A549 (cell line): ENCODE measurements at regions of chr12 and their contacts with region 1.

Region 1: GRCh38 chr12:113955109-113955970 is 10.8 kb downstream of the RBM19 start:
- DNase-seq: peak; percentile 70 to 73
- ATAC-seq: peak; percentile 88 to 96
- H3K4me3 ChIP-seq: no peak overlapping the region
- H3K27ac ChIP-seq: no peak overlapping the region
- H3K4me1 ChIP-seq: no peaks in the 10 kb centered on the region
- CTCF ChIP-seq: peak; percentile 60
- EP300 ChIP-seq: no peak
- POLR2A ChIP-seq: no peak
- RAD21 ChIP-seq: peak; percentile 14 to 27; a peak in 2 of 5 replicates

Region 2: DNA sequence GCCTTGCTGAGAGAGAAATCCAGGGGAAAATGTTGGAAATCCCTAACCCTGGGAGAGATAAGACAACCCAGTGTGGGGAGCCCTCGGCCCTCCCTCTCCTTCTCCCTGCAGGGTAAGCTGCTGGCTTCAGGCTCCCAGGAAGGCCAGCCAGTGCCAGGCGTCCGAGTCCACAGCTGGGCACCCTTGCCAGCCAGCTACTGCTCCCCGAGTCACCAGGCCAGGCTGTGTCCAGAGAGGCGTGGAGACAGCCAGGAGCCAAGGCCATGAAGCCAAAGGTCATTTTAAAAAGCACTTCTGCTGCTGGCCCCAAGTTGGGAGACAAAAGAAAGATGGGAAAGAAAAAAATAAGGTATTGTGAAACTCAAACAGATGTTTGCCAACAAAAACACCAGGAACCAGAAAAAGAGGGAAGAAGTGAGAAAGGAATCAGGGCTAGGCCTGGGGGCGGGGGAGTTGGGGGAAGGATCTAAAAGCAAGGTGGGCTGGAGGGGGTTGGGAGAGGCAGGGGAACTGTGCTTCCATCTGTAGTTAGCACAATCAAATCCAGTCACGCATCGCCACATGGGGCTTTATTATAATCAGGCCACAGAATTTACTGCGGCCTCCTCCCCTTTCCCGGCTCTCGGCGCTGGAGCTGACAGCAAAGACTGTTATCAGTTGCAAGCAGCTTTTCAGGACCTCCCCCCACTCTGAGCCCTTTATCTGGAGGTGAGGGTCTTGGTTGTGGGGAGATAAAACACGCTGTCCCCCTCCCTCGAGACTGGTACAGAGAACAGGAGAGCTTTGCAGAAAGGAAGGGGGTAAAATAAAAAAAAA is 22.8 kb before region 1 on chr12:
- CTCF ChIA-PET with region 1: interaction called, 17 read pairs
- POLR2A ChIA-PET with region 1: no interaction called
- DNase-seq: no peak
- ATAC-seq: no peak
- H3K4me3 ChIP-seq: no peak overlapping the region
- H3K27ac ChIP-seq: no peak overlapping the region
- H3K4me1 ChIP-seq: no peaks in the 10 kb centered on the region
- CTCF ChIP-seq: no peak
- EP300 ChIP-seq: no peak
- POLR2A ChIP-seq: no peak
- RAD21 ChIP-seq: no peak

Region 3: GRCh38 chr12:113940357-113941207 is 14.8 kb before region 1 on chr12:
- CTCF ChIA-PET with region 1: interaction called, 17 read pairs
- POLR2A ChIA-PET with region 1: no interaction called
- DNase-seq: no peak
- ATAC-seq: peak in 1 of 2 experiments; percentile 58; a peak in 3 of 6 replicates
- H3K4me3 ChIP-seq: no peak overlapping the region
- H3K27ac ChIP-seq: no peak overlapping the region
- H3K4me1 ChIP-seq: no peaks in the 10 kb centered on the region
- CTCF ChIP-seq: no peak
- EP300 ChIP-seq: no peak
- POLR2A ChIP-seq: no peak
- RAD21 ChIP-seq: no peak

Region 4: DNA sequence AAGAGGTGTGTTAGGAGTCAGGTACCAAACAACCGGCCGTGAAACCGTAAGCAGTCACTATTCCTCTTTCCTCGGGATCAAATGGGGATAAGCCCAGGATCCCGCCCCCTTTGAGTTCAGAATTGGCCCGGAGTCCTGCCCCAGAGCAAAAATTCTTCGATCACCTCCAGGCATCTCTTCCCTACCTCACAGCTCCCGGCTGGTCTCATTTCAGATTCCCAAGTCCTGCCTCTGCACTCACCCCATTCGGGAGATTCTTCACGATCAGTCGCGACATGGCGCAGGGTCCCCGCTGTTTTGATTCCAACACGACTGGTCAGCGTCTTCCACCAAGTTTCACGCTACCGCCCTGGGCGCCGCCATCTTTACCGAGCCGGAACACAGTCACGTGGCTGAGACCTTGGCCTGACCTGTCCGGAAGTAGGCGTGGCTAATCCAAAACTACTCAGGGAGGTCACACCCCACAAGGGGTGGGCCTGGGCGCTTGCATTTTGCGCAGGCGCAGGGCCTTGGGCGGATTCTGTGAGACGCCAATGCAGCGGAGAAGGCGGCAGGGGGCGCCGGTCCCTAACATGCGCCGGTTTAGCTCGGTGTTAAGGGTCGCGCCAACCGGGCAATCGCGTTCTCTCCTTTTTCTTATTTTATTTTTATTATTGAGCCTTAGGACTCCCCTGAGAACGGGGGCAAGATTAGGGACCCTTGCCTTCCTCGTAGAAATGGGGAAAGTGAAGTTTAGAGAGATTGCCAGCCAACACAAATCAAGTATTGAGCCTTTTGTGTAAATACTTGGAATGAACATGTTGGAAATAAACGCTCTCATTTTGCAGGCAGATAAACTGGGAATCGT is 10.8 kb after region 1 on chr12 and contains the start of gene RBM19:
- CTCF ChIA-PET with region 1: interaction called, 14 read pairs
- POLR2A ChIA-PET with region 1: no interaction called
- DNase-seq: peak; percentile 97 to 98
- ATAC-seq: peak; percentile 89 to 98
- H3K4me3 ChIP-seq: peak within 1 kb of the TSS; percentile 62
- H3K27ac ChIP-seq: peak within 1 kb of the TSS; percentile 64 to 87
- H3K4me1 ChIP-seq: peaks cover 11% of the 10 kb centered on the region; the same call in 2 of the 3 replicates
- CTCF ChIP-seq: peak; percentile 89
- EP300 ChIP-seq: no peak
- POLR2A ChIP-seq: peak; percentile 77
- RAD21 ChIP-seq: peak; percentile 52 to 61
- polyA plus RNA-seq, gene RBM19: 14.9 and 16.0 TPM in 2 replicates